B cell (primary cell): ENCODE measurements at regions of chr6 and their contacts with region 1.

Region 1: GRCh38 chr6:167141667-167142432 is 15.9 kb downstream of the GPR31 start:
- DNase-seq: peak; percentile 77
- ATAC-seq: peak; percentile 61
- H3K4me3 ChIP-seq: no peak overlapping the region
- H3K4me3 Mint-ChIP-seq: peak overlapping the region; percentile 62
- H3K27ac ChIP-seq: peak overlapping the region; percentile 50 to 68
- H3K27ac Mint-ChIP-seq: peak overlapping the region; percentile 92
- H3K4me1 ChIP-seq: peaks cover 32 to 39% of the 10 kb centered on the region in 2 donors
- H3K4me1 Mint-ChIP-seq: peaks cover 61% of the 10 kb centered on the region
- H3K27me3 ChIP-seq: no peaks in the 10 kb centered on the region
- H3K27me3 Mint-ChIP-seq: no peaks in the 10 kb centered on the region
- CTCF ChIP-seq: peak; percentile 98

Region 2: DNA sequence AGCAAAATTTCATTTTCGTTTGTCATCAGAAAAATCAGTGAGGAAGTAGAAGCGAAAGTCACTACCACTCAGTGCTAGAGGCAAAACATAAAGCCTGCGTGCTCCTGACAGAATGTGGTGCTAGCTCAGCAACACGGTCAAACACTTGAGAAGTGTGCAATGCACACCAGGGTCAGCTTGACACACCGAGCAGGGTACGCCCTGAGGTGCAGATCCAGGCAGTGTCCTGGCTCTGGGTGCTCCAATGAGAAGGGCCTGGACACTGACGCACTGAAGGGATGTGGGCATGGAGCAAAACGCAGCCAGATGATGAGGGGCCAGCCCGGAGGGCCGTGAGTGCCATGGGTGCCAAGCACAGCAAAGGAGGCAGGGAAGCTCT is 191.4 kb before region 1 on chr6:
- CTCF ChIA-PET with region 1: interaction called, 26 read pairs
- POLR2A ChIA-PET with region 1: interaction called, 3 read pairs
- intact Hi-C with region 1: no loop called
- DNase-seq: peak; percentile 76
- ATAC-seq: peak; percentile 22
- H3K4me3 ChIP-seq: peak overlapping the region; percentile 1 to 60 (median 24)
- H3K4me3 Mint-ChIP-seq: peak overlapping the region; percentile 94
- H3K27ac ChIP-seq: peak overlapping the region; percentile 82 to 94
- H3K27ac Mint-ChIP-seq: peak overlapping the region; percentile 98
- H3K4me1 ChIP-seq: peaks cover 62 to 69% of the 10 kb centered on the region in 2 donors
- H3K4me1 Mint-ChIP-seq: peaks cover 60% of the 10 kb centered on the region
- H3K27me3 ChIP-seq: no peaks in the 10 kb centered on the region
- H3K27me3 Mint-ChIP-seq: no peaks in the 10 kb centered on the region
- CTCF ChIP-seq: no peak

Region 3: DNA sequence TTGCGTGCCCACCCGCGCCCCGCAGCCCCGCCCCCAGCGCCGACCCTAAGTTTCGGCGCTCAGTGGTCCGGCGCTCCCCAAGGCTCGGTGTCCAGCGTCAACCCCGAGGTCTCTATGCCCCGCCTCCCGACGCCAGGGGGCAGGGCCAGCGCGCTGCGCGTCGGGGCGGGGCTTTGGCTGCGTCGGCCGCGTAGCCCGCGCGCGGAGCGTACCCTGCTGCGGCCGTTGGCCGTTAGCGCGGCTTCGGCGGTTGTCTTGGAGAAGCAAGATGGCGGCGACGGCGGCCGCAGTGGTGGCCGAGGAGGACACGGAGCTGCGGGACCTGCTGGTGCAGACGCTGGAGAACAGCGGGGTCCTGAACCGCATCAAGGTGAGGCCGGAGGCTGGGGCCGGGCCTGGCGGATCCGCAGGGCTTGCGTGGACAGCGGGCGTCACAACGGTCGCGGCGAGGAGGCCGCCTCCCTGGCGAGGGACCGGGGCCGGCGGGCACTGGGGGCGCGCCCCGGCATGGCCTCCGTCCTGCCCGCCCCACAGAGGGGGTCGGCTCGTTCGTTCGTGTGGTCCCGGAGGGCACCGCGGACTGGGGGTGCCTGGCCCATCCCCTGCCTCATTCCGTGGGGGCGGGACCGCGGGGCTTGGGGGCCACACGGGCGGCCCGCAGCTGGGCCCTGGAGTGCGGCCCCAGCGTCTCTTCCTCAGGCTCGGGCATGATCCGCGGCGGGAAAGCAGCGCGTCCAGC is 142.5 kb before region 1 on chr6 and contains the start of gene CEP43:
- CTCF ChIA-PET with region 1: interaction called, 75 read pairs
- POLR2A ChIA-PET with region 1: interaction called, 7 read pairs
- intact Hi-C with region 1: loop called (anchors 1 kb)
- DNase-seq: peak; percentile 98
- ATAC-seq: peak; percentile 95
- H3K4me3 ChIP-seq: peak within 1 kb of the TSS; percentile 70 to 95 (median 91)
- H3K4me3 Mint-ChIP-seq: peak within 1 kb of the TSS; percentile 91
- H3K27ac ChIP-seq: peak within 1 kb of the TSS; percentile 31 to 83
- H3K27ac Mint-ChIP-seq: peak within 1 kb of the TSS; percentile 86
- H3K4me1 ChIP-seq: peaks cover 21 to 23% of the 10 kb centered on the region in 2 donors
- H3K4me1 Mint-ChIP-seq: peaks cover 29% of the 10 kb centered on the region
- H3K27me3 ChIP-seq: no peaks in the 10 kb centered on the region
- H3K27me3 Mint-ChIP-seq: no peaks in the 10 kb centered on the region
- CTCF ChIP-seq: no peak
- total RNA-seq, gene CEP43: 33.7 and 39.7 TPM in 2 replicates

Region 4: GRCh38 chr6:167047554-167047953 is 94.3 kb before region 1 on chr6:
- CTCF ChIA-PET with region 1: interaction called, 32 read pairs
- POLR2A ChIA-PET with region 1: no interaction called
- intact Hi-C with region 1: no loop called
- DNase-seq: peak; percentile 86
- ATAC-seq: peak; percentile 81
- H3K4me3 ChIP-seq: peak overlapping the region in 4 of 5 experiments; percentile 31 to 57 (median 44)
- H3K4me3 Mint-ChIP-seq: peak overlapping the region; percentile 57
- H3K27ac ChIP-seq: peak overlapping the region; percentile 70 to 88
- H3K27ac Mint-ChIP-seq: peak overlapping the region; percentile 79
- H3K4me1 ChIP-seq: peaks cover 36 to 47% of the 10 kb centered on the region in 2 donors
- H3K4me1 Mint-ChIP-seq: peaks cover 55% of the 10 kb centered on the region
- H3K27me3 ChIP-seq: no peaks in the 10 kb centered on the region
- H3K27me3 Mint-ChIP-seq: no peaks in the 10 kb centered on the region
- CTCF ChIP-seq: no peak

Region 5: DNA sequence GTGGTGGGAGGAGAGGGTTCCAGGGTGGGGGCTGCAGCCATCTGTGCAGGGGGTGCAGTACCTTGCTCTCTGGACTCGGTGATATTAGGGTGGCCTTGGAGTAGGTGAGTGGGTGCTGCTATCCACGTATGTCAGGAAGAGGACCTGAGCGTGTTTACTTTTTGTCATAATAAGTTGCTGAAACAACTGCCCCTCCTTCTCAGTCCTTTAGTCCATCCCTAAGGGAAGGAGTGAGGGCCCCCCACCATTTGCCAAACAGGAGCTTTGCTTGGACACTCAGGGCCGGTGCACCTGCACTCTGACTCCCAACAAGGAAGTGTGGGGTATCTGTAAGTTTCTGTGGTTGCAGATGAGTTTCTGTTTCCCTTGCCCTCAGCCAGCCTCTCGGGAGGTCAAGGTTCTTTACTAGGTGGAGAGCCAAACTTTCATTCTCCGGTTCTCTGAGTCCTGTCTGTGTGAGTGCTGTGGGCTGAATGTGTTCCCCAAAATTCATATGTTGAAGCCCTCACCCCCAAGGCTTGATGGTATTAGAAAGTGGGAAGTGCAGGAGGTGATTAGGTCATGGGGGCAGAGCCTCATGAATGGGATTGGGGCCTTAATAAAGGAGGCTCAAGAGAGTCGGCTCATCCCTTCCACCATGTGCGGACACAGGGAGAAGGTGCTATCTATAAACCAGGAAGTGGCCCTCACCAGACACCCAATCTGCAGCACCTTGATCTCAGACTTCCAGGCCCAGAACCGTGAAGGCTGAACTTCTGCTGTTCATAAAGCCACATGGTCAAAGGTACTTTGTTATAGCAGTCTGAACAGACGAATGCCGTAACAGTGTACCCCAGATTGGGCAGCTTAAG is 38.6 kb before region 1 on chr6:
- CTCF ChIA-PET with region 1: interaction called, 28 read pairs
- POLR2A ChIA-PET with region 1: no interaction called
- intact Hi-C with region 1: no loop called
- DNase-seq: peak; percentile 84
- ATAC-seq: peak; percentile 74
- H3K4me3 ChIP-seq: peak overlapping the region in 2 of 5 experiments; percentile 2 to 7
- H3K4me3 Mint-ChIP-seq: peak overlapping the region; percentile 85
- H3K27ac ChIP-seq: peak overlapping the region; percentile 83 to 92
- H3K27ac Mint-ChIP-seq: peak overlapping the region; percentile 95
- H3K4me1 ChIP-seq: peaks cover 95 to 99% of the 10 kb centered on the region in 2 donors
- H3K4me1 Mint-ChIP-seq: peaks cover 95% of the 10 kb centered on the region
- H3K27me3 ChIP-seq: no peaks in the 10 kb centered on the region
- H3K27me3 Mint-ChIP-seq: no peaks in the 10 kb centered on the region
- CTCF ChIP-seq: no peak

Region 6: GRCh38 chr6:167130008-167130677 is 11.7 kb before region 1 on chr6:
- CTCF ChIA-PET with region 1: interaction called, 437 read pairs
- POLR2A ChIA-PET with region 1: interaction called, 7 read pairs
- intact Hi-C with region 1: loop called (anchors 1 kb)
- DNase-seq: peak; percentile 70
- ATAC-seq: peak; percentile 26
- H3K4me3 ChIP-seq: peak overlapping the region in 1 of 5 experiments; percentile 21
- H3K4me3 Mint-ChIP-seq: peak overlapping the region; percentile 53
- H3K27ac ChIP-seq: peak overlapping the region; percentile 82 to 92
- H3K27ac Mint-ChIP-seq: peak overlapping the region; percentile 100
- H3K4me1 ChIP-seq: peaks cover 78 to 82% of the 10 kb centered on the region in 2 donors
- H3K4me1 Mint-ChIP-seq: peaks cover 88% of the 10 kb centered on the region
- H3K27me3 ChIP-seq: no peaks in the 10 kb centered on the region
- H3K27me3 Mint-ChIP-seq: no peaks in the 10 kb centered on the region
- CTCF ChIP-seq: no peak